ENCODE measurements at regions of chr7 and their contacts with region 1.

Region 1: GRCh38 chr7:38215735-38216670 is 38.0 kb downstream of the STARD3NL start:
- DNase-seq: peak; percentile 86
- ATAC-seq: peak; percentile 87
- H3K4me3 Mint-ChIP-seq: no peak overlapping the region
- H3K27ac Mint-ChIP-seq: peak overlapping the region; percentile 7
- H3K4me1 Mint-ChIP-seq: peaks cover 31% of the 10 kb centered on the region
- H3K27me3 Mint-ChIP-seq: no peaks in the 10 kb centered on the region

Region 2: GRCh38 chr7:37815671-37816371 is 400.2 kb before region 1 on chr7:
- CTCF ChIA-PET with region 1: no interaction called
- POLR2A ChIA-PET with region 1: no interaction called
- intact Hi-C with region 1: no loop called
- DNase-seq: no peak
- ATAC-seq: no peak
- H3K4me3 Mint-ChIP-seq: no peak overlapping the region
- H3K27ac Mint-ChIP-seq: no peak overlapping the region
- H3K4me1 Mint-ChIP-seq: no peaks in the 10 kb centered on the region
- H3K27me3 Mint-ChIP-seq: no peaks in the 10 kb centered on the region

Region 3: GRCh38 chr7:38040831-38041230 is 175.2 kb before region 1 on chr7:
- CTCF ChIA-PET with region 1: no interaction called
- POLR2A ChIA-PET with region 1: no interaction called
- intact Hi-C with region 1: no loop called
- DNase-seq: no peak
- ATAC-seq: no peak
- H3K4me3 Mint-ChIP-seq: no peak overlapping the region
- H3K27ac Mint-ChIP-seq: no peak overlapping the region
- H3K4me1 Mint-ChIP-seq: no peaks in the 10 kb centered on the region
- H3K27me3 Mint-ChIP-seq: peaks cover 4% of the 10 kb centered on the region

Region 4: DNA sequence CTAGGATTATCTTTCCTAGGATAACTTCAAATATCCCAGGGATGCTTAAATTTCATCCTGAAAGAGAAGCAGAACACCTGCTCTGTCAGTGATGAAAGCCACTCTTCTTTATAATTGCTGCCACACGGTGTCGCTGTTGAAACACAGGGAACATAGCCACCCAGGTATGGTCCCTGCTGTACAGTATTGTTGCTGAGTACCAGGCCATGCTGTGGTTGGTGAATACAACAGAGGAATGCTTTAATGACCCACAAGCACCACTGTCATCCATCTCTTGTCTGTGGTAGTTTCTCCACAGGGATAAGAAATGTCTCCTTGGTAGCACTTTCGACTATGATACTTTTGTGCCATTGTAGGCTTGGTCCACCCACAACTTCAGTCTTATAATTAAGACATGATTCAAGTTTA is 108.5 kb before region 1 on chr7:
- CTCF ChIA-PET with region 1: interaction called, 70 read pairs
- POLR2A ChIA-PET with region 1: no interaction called
- intact Hi-C with region 1: no loop called
- DNase-seq: peak; percentile 80
- ATAC-seq: peak; percentile 85
- H3K4me3 Mint-ChIP-seq: no peak overlapping the region
- H3K27ac Mint-ChIP-seq: no peak overlapping the region
- H3K4me1 Mint-ChIP-seq: no peaks in the 10 kb centered on the region
- H3K27me3 Mint-ChIP-seq: peaks cover 16% of the 10 kb centered on the region

Region 5: GRCh38 chr7:38186593-38187314 is 29.2 kb before region 1 on chr7:
- CTCF ChIA-PET with region 1: interaction called, 71 read pairs
- POLR2A ChIA-PET with region 1: no interaction called
- intact Hi-C with region 1: no loop called
- DNase-seq: no peak
- ATAC-seq: no peak
- H3K4me3 Mint-ChIP-seq: no peak overlapping the region
- H3K27ac Mint-ChIP-seq: no peak overlapping the region
- H3K4me1 Mint-ChIP-seq: peaks cover 25% of the 10 kb centered on the region
- H3K27me3 Mint-ChIP-seq: no peaks in the 10 kb centered on the region

Region 6: DNA sequence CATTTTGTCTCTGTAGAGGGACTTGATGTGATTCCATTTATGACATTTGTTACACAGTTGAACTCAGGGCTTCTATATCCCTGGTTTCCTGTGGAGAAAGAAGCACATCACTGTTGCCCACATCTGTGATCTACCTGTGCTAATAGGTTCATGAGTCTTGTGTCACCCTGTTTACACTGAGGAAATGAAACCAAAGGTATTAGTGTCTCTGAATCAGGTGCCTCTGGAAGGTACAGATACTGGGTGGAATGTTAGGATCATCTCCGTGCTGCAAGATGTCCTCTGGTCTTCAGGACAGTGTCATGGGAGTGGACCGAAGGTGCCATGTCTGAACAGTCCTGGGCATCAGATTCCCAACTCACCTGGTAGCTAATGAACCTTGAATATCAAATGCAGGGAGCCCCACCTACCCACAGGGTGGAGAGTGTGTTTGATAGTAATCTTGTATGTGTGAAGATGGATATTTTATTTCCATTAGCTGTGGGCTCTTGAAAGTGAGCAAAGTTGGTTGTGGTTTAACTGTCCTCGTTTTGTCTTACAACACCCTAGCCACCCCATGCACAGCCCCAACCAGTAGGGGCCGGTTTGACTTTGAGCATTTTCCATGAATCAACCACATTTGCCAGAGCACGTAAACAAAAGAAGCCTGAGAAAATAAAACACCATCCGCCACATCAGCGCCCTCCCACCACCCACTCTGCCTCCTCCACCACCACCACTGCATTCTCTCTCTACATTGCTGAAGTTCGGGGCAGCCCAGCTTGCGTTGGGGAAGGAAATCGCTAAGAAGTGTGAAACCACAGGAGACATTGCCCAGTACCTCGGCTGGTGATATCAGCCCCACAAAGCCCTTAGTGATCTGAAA is 16.7 kb after region 1 on chr7:
- CTCF ChIA-PET with region 1: interaction called, 19 read pairs
- POLR2A ChIA-PET with region 1: interaction called, 6 read pairs
- intact Hi-C with region 1: no loop called
- DNase-seq: peak; percentile 84
- ATAC-seq: peak; percentile 88
- H3K4me3 Mint-ChIP-seq: peak overlapping the region; percentile 50
- H3K27ac Mint-ChIP-seq: peak overlapping the region; percentile 71
- H3K4me1 Mint-ChIP-seq: peaks cover 39% of the 10 kb centered on the region
- H3K27me3 Mint-ChIP-seq: no peaks in the 10 kb centered on the region

Region 7: GRCh38 chr7:38335492-38336147 is 119.6 kb after region 1 on chr7:
- CTCF ChIA-PET with region 1: interaction called, 80 read pairs
- POLR2A ChIA-PET with region 1: interaction called, 3 read pairs
- intact Hi-C with region 1: loop called (anchors 1 to 5 kb)
- DNase-seq: peak; percentile 91
- ATAC-seq: peak; percentile 95
- H3K4me3 Mint-ChIP-seq: peak overlapping the region; percentile 65
- H3K27ac Mint-ChIP-seq: peak overlapping the region; percentile 80
- H3K4me1 Mint-ChIP-seq: peaks cover 42% of the 10 kb centered on the region
- H3K27me3 Mint-ChIP-seq: no peaks in the 10 kb centered on the region